ENCODE measurements at regions of chr6 and their contacts with region 1.

Region 1: GRCh38 chr6:24440897-24441598 is 38.3 kb downstream of the MRS2 start:
- DNase-seq: no peak
- ATAC-seq: no peak
- H3K4me3 ChIP-seq: no peak overlapping the region
- H3K4me3 Mint-ChIP-seq: no peak overlapping the region
- H3K27ac ChIP-seq: no peak overlapping the region
- H3K27ac Mint-ChIP-seq: no peak overlapping the region
- H3K4me1 ChIP-seq: no peaks in the 10 kb centered on the region
- H3K4me1 Mint-ChIP-seq: peaks cover 2 to 7% (median 6%) of the 10 kb centered on the region in 3 donors
- H3K27me3 ChIP-seq: peaks cover 0 to 3% of the 10 kb centered on the region in 2 experiments
- H3K27me3 Mint-ChIP-seq: no peaks in the 10 kb centered on the region

Region 2: DNA sequence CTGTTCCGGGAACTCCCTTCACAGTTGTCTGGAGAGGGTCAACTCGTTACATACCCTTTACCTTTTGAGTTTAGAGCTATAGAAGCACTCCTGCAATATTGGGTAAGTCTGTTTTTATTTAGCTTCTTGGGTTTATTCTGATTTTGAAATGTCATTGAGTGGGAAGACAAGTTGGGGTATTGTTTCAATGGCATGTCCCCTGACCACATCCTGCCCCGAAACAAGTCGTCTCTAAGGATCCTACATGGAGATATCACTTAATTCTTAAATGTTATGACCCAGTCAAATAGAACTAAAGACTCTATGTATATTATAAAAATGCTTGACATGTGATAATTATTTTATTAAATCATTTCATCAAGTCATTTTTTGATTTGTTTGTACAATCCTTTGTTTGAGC is 28.8 kb before region 1 on chr6:
- CTCF ChIA-PET with region 1: no interaction called
- POLR2A ChIA-PET with region 1: no interaction called
- DNase-seq: no peak
- ATAC-seq: no peak
- H3K4me3 ChIP-seq: no peak overlapping the region
- H3K4me3 Mint-ChIP-seq: no peak overlapping the region
- H3K27ac ChIP-seq: no peak overlapping the region
- H3K27ac Mint-ChIP-seq: no peak overlapping the region
- H3K4me1 ChIP-seq: no peaks in the 10 kb centered on the region
- H3K4me1 Mint-ChIP-seq: peaks cover 0 to 12% (median 8%) of the 10 kb centered on the region in 3 donors
- H3K27me3 ChIP-seq: no peaks in the 10 kb centered on the region
- H3K27me3 Mint-ChIP-seq: no peaks in the 10 kb centered on the region

Region 3: GRCh38 chr6:24431045-24431451 is 10.0 kb before region 1 on chr6:
- CTCF ChIA-PET with region 1: interaction called in 1 of 2 experiments, 3 read pairs
- POLR2A ChIA-PET with region 1: interaction called in 1 of 2 experiments, 12 read pairs
- DNase-seq: peak in 2 of 35 experiments; percentile 14 to 61
- ATAC-seq: peak in 2 of 4 experiments; percentile 38 to 41
- H3K4me3 ChIP-seq: no peak overlapping the region
- H3K4me3 Mint-ChIP-seq: no peak overlapping the region
- H3K27ac ChIP-seq: no peak overlapping the region
- H3K27ac Mint-ChIP-seq: no peak overlapping the region
- H3K4me1 ChIP-seq: no peaks in the 10 kb centered on the region
- H3K4me1 Mint-ChIP-seq: no peaks in the 10 kb centered on the region
- H3K27me3 ChIP-seq: no peaks in the 10 kb centered on the region
- H3K27me3 Mint-ChIP-seq: no peaks in the 10 kb centered on the region